ENCODE measurements at regions of chr2 and their contacts with region 1.

Region 1: DNA sequence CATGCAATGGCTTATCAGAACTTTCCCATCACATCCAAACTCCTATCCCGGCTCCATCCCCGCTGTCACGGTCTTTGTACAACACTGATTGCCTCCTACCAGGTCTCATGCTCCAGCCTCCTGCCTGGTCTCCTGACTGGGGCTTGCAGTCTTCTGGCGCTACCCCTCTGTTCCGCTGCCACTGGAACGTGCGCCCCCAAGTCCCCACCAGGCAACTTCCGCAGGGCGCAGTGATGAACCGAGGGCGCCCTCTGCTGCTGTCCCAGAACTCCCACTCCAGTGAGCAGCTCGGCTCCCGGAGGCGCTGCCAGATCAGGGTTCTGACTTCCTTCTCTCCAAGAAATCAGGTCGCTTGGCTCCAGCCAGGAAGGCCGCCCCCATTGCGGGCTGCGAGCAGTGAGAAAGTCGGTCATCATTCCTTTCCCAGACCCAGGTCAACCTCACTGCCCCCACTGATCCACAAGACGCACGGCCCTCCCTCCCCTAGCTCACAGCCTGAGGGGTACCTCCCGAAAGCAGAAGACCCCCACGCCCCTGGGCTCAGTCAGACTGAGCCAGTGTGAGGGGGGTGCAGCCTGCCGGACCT is 43.9 kb upstream of the RAB11FIP5 start:
- DNase-seq: peak; percentile 58 to 69
- ATAC-seq: peak; percentile 96 to 98
- H3K4me3 ChIP-seq: 0 out of 3 replicates have a peak overlapping the region, but pooled peaks have one; percentile 5
- H3K27ac ChIP-seq: peak overlapping the region in 1 of 2 experiments; percentile 65; a peak in 2 of 6 replicates
- H3K4me1 ChIP-seq: peaks cover 4% of the 10 kb centered on the region; the same call in 1 of the 3 replicates
- CTCF ChIP-seq: peak; percentile 93
- EP300 ChIP-seq: no peak
- POLR2A ChIP-seq: no peak
- RAD21 ChIP-seq: peak; percentile 96 to 97

Region 2: DNA sequence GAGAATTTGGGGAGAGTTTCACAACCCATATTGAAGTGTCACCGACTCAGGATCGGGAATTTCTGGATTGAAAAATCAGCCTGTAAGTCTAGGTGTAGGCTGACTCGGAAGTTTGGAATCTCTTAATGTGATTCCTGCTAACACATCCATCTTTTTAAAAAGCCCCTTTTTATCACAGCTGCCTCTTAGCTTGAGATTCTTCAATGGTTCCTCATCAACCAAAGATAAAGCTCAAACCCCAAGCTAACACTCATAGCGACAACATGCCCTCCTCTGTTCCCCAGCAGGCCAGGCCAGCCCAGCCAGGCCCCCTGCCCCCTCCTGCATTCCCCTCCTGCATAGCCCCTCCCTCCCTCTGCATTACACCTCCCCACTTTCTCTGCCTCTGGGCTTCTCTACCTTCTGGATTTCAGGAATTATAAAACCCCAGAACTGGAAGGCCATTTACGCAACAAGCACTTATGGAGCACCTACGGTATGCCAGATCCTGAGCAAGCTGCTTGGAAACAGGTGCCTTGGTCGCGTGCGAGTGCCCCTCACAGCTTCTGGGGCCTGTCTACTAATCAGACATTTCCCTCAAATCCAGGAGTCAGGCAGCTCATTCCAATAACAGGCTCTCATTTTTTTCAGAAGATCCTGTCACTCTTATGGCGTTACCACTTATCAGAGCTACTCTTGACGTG is 176.0 kb before region 1 on chr2:
- CTCF ChIA-PET with region 1: interaction called, 10 read pairs
- POLR2A ChIA-PET with region 1: no interaction called
- DNase-seq: no peak
- ATAC-seq: peak in 1 of 2 experiments; percentile 17; a peak in 1 of 6 replicates
- H3K4me3 ChIP-seq: no peak overlapping the region
- H3K27ac ChIP-seq: no peak overlapping the region
- H3K4me1 ChIP-seq: peaks cover 7% of the 10 kb centered on the region; the same call in 1 of the 3 replicates
- CTCF ChIP-seq: no peak
- EP300 ChIP-seq: no peak
- POLR2A ChIP-seq: no peak
- RAD21 ChIP-seq: no peak

Region 3: DNA sequence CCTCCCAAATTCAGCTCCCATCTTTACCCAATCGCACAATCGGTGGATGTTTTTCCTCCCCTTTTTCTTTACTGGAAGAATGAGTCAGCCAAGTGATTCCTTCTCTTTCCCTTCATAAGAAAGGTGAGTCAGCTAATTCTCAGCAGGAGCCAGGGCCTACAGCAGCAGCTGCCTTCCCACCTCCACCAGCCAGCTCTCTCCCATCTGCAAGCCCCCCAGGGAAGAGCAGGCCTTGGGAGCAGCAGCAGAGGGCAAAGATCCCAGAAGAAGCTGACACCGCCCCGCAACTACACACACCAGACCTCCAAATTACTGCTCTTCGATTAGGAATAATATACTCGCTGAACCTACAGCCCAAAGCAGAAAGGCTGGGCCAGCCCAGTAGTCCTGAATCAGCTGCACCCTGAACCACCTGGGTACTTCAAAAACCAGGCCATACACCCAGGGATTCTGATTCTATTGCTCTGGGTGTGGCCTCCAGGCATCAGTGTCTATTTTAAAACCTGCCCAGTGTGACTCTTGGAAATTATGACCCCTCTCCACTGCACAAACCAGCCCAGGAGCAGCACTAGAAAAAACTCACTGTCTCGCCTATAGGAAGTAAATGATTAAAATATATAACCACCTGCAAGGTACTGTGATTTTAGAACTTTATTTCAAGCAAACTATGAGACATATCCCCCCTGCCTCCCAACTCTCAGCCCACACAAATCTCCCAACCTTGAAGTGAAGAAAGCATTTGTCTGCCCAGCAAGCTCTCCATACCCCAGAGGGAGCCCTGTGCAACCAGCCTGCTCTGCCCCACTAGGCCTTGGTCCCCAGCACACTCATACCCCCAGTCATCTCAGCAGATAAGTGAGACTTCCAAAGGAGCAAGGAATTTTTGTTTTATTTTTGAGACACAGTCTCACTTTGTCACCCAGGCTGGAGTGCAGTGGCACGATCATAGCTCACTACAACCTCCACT is 92.4 kb before region 1 on chr2:
- CTCF ChIA-PET with region 1: interaction called, 17 read pairs
- POLR2A ChIA-PET with region 1: no interaction called
- DNase-seq: peak; percentile 62 to 77
- ATAC-seq: peak; percentile 93 to 96
- H3K4me3 ChIP-seq: peak overlapping the region; percentile 12; the same call in 1 of the 3 replicates
- H3K27ac ChIP-seq: peak overlapping the region; percentile 92 to 95
- H3K4me1 ChIP-seq: peaks cover 52% of the 10 kb centered on the region
- CTCF ChIP-seq: no peak
- EP300 ChIP-seq: no peak
- POLR2A ChIP-seq: no peak
- RAD21 ChIP-seq: peak in 1 of 2 experiments; percentile 11; a peak in 1 of 5 replicates

Region 4: DNA sequence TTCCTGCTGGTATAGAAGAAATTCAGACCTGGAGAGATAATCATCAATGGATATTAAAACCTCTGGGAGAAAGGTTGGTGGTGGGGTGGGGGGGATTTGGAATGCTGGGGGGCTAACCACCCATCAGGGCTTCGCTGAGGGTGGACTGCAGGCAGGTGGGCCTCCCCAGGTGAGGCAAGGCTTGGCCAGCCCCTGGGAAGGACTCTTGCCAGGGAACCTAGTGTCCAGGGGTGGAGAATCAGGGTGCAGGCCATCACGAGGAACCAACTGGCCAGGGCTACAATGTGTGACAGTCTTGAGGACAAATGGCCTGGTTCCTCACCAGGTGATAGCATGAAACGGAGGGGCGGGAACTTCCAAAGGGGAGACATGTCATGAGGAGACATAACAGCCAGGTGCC is 55.7 kb before region 1 on chr2:
- CTCF ChIA-PET with region 1: interaction called, 16 read pairs
- POLR2A ChIA-PET with region 1: no interaction called
- DNase-seq: no peak
- ATAC-seq: no peak
- H3K4me3 ChIP-seq: no peak overlapping the region
- H3K27ac ChIP-seq: no peak overlapping the region
- H3K4me1 ChIP-seq: no peaks in the 10 kb centered on the region
- CTCF ChIP-seq: no peak
- EP300 ChIP-seq: no peak
- POLR2A ChIP-seq: no peak
- RAD21 ChIP-seq: no peak

Region 5: DNA sequence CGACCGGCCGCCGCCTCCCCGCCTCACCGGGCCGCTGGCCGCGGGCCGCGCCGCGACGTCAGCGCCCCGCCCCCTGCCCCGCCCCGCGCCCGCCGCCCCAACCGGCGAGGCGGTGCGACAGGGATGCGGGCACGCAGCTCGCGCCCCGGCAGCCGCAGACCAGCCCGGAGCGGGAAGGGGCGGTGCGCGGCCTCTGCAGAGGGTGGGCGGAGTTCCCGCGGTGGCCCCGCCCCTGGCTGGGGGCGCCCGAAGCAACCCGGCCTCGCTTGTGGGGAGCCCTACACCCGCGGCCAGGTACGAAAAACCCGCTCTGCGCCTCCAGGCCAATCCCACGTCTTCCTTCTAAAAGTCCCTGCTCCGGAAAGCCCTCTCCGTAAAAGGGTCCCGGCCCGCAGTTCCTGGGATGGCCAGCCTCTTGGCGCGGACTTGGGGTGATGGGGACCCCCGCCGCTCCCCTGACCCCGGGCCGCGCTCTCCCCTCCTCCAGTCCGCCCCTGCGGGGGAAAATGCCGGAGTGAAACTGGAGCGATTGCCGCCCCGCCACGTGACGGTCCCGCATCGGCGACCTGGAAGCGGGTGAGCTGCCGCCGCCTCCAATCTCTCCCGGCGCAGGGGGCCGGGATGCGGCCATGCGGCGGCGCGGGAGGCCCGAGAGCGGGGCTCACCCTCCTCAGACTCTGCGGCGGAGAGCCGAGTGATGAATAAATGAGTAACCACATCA is 43.6 kb before region 1 on chr2 and contains the start of gene RAB11FIP5:
- CTCF ChIA-PET with region 1: interaction called, 27 read pairs
- POLR2A ChIA-PET with region 1: no interaction called
- DNase-seq: peak; percentile 67 to 81
- ATAC-seq: peak; percentile 77 to 88
- H3K4me3 ChIP-seq: peak within 1 kb of the TSS; percentile 91
- H3K27ac ChIP-seq: peak within 1 kb of the TSS; percentile 86 to 92
- H3K4me1 ChIP-seq: peaks cover 20% of the 10 kb centered on the region
- CTCF ChIP-seq: no peak
- EP300 ChIP-seq: no peak
- POLR2A ChIP-seq: peak; percentile 23; the same call in 1 of the 2 replicates
- RAD21 ChIP-seq: no peak; a peak in 1 of 5 replicates
- polyA plus RNA-seq, gene RAB11FIP5: 21.6 and 30.8 TPM in 2 replicates

Region 6: DNA sequence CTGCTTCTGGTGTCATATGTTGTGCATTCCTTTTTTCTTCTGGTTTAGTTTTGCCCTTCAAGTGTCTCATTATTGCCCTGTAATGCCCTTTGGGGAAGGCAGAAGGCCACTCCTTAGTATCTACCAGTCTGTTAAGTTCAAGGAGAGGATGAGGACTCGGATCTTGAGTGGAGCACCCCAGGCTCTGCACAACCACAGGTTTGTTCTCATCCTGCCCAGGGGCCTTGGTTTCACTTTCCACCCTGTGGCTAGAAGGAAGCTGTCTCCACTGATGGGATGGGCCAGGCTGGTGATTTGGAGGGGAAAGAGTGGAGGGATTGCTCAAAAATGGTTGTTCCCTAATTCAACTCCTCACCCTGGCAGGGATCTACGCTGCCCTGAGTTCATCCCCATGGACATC is 13.7 kb before region 1 on chr2:
- CTCF ChIA-PET with region 1: interaction called, 17 read pairs
- POLR2A ChIA-PET with region 1: no interaction called
- DNase-seq: no peak
- ATAC-seq: no peak
- H3K4me3 ChIP-seq: no peak overlapping the region
- H3K27ac ChIP-seq: no peak overlapping the region
- H3K4me1 ChIP-seq: no peaks in the 10 kb centered on the region
- CTCF ChIP-seq: no peak
- EP300 ChIP-seq: no peak
- POLR2A ChIP-seq: no peak
- RAD21 ChIP-seq: no peak

Region 7: GRCh38 chr2:73385595-73386341 is 229.1 kb after region 1 on chr2 and contains the start of gene ALMS1:
- CTCF ChIA-PET with region 1: no interaction called
- POLR2A ChIA-PET with region 1: no interaction called
- DNase-seq: peak; percentile 85 to 94
- ATAC-seq: peak; percentile 91 to 94
- H3K4me3 ChIP-seq: peak within 1 kb of the TSS; percentile 69
- H3K27ac ChIP-seq: peak within 1 kb of the TSS; percentile 82 to 94
- H3K4me1 ChIP-seq: peaks cover 10% of the 10 kb centered on the region; the same call in 2 of the 3 replicates
- CTCF ChIP-seq: no peak
- EP300 ChIP-seq: no peak
- POLR2A ChIP-seq: peak; percentile 81
- RAD21 ChIP-seq: peak in 1 of 2 experiments; percentile 32; a peak in 1 of 5 replicates
- polyA plus RNA-seq, gene ALMS1: 12.2 and 13.5 TPM in 2 replicates

Measured in A549 (cell line).